CD4-positive, alpha-beta memory T cell (primary cell): ENCODE measurements at regions of chr11 and their contacts with region 1.

Region 1: GRCh38 chr11:7442588-7443215 is 42.6 kb upstream of the OLFML1 start:
- DNase-seq: peak; percentile 55 to 61 (median 59)
- H3K4me3 ChIP-seq: no peak overlapping the region
- H3K4me3 Mint-ChIP-seq: no peak overlapping the region
- H3K27ac ChIP-seq: no peak overlapping the region
- H3K27ac Mint-ChIP-seq: no peak overlapping the region
- H3K4me1 ChIP-seq: no peaks in the 10 kb centered on the region
- H3K4me1 Mint-ChIP-seq: peaks cover 0 to 2% (median 0%) of the 10 kb centered on the region in 4 donors
- H3K27me3 ChIP-seq: no peaks in the 10 kb centered on the region
- H3K27me3 Mint-ChIP-seq: peaks cover 2 to 5% of the 10 kb centered on the region in 2 donors

Region 2: GRCh38 chr11:7098235-7098832 is 344.4 kb before region 1 on chr11:
- CTCF ChIA-PET with region 1: interaction called, 71 read pairs
- POLR2A ChIA-PET with region 1: no interaction called
- intact Hi-C with region 1: loop called (anchors 1 kb)
- DNase-seq: peak; percentile 32 to 47 (median 39)
- H3K4me3 ChIP-seq: no peak overlapping the region
- H3K4me3 Mint-ChIP-seq: no peak overlapping the region
- H3K27ac ChIP-seq: no peak overlapping the region
- H3K27ac Mint-ChIP-seq: no peak overlapping the region
- H3K4me1 ChIP-seq: no peaks in the 10 kb centered on the region
- H3K4me1 Mint-ChIP-seq: no peaks in the 10 kb centered on the region
- H3K27me3 ChIP-seq: no peaks in the 10 kb centered on the region
- H3K27me3 Mint-ChIP-seq: peaks cover 5 to 11% of the 10 kb centered on the region in 2 donors

Region 3: GRCh38 chr11:7299393-7299792 is 143.3 kb before region 1 on chr11:
- CTCF ChIA-PET with region 1: no interaction called
- POLR2A ChIA-PET with region 1: no interaction called
- intact Hi-C with region 1: no loop called
- DNase-seq: no peak
- H3K4me3 ChIP-seq: no peak overlapping the region
- H3K4me3 Mint-ChIP-seq: no peak overlapping the region
- H3K27ac ChIP-seq: no peak overlapping the region
- H3K27ac Mint-ChIP-seq: no peak overlapping the region
- H3K4me1 ChIP-seq: no peaks in the 10 kb centered on the region
- H3K4me1 Mint-ChIP-seq: no peaks in the 10 kb centered on the region
- H3K27me3 ChIP-seq: no peaks in the 10 kb centered on the region
- H3K27me3 Mint-ChIP-seq: peaks cover 5 to 6% of the 10 kb centered on the region in 2 donors

Region 4: DNA sequence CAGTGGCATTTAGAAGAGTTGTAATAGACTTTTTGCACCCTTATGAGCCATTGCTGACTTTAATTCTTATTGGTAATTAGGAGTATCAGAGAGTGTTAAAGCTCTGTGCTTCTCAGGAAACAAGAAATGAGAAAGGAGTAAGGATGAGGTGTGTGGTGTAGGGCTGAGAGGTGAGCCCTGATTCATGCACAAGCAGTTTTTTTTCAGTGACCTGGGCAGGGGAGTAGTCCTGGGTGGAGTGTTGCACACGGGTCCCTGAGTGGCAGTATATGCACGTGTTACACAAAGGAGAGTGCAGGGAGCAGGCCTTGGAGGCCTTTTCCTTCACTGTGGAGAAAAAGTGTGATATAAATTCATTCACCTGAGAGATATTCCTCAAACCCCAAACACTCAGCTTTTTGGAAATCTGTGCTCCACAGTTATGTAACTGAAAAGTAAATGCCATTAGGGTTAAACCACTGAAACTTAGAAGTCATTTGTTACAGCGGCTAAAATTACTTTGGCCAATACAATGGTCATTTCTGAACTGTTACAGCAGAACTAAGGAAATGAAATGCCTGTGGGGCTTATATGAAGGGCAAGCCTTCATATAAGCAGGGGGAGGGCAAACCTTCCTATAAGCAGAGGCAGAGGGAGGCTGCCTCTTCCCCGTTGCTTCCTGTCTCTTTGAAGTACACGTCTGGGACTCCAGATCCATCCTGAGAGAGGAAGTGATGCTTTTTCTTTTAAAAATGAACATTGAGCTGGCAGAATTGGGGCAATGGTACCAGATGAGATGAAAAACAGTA is 20.0 kb before region 1 on chr11:
- CTCF ChIA-PET with region 1: interaction called, 12 read pairs
- POLR2A ChIA-PET with region 1: interaction called, 3 read pairs
- intact Hi-C with region 1: no loop called
- DNase-seq: peak in 2 of 5 donors; percentile 5 to 6
- H3K4me3 ChIP-seq: no peak overlapping the region
- H3K4me3 Mint-ChIP-seq: peak overlapping the region in 6 of 8 donors; percentile 17 to 40 (median 34)
- H3K27ac ChIP-seq: no peak overlapping the region
- H3K27ac Mint-ChIP-seq: peak overlapping the region in 6 of 7 donors; percentile 2 to 82 (median 35)
- H3K4me1 ChIP-seq: peaks cover 13% of the 10 kb centered on the region
- H3K4me1 Mint-ChIP-seq: peaks cover 12 to 23% (median 17%) of the 10 kb centered on the region in 4 donors
- H3K27me3 ChIP-seq: no peaks in the 10 kb centered on the region
- H3K27me3 Mint-ChIP-seq: peaks cover 0 to 3% of the 10 kb centered on the region in 2 donors

Region 5: GRCh38 chr11:7473717-7474116 is 31.0 kb after region 1 on chr11:
- CTCF ChIA-PET with region 1: no interaction called
- POLR2A ChIA-PET with region 1: no interaction called
- intact Hi-C with region 1: no loop called
- DNase-seq: no peak
- H3K4me3 ChIP-seq: no peak overlapping the region
- H3K4me3 Mint-ChIP-seq: no peak overlapping the region
- H3K27ac ChIP-seq: no peak overlapping the region
- H3K27ac Mint-ChIP-seq: no peak overlapping the region
- H3K4me1 ChIP-seq: no peaks in the 10 kb centered on the region
- H3K4me1 Mint-ChIP-seq: no peaks in the 10 kb centered on the region
- H3K27me3 ChIP-seq: no peaks in the 10 kb centered on the region
- H3K27me3 Mint-ChIP-seq: peaks cover 0 to 3% of the 10 kb centered on the region in 2 donors

Region 6: DNA sequence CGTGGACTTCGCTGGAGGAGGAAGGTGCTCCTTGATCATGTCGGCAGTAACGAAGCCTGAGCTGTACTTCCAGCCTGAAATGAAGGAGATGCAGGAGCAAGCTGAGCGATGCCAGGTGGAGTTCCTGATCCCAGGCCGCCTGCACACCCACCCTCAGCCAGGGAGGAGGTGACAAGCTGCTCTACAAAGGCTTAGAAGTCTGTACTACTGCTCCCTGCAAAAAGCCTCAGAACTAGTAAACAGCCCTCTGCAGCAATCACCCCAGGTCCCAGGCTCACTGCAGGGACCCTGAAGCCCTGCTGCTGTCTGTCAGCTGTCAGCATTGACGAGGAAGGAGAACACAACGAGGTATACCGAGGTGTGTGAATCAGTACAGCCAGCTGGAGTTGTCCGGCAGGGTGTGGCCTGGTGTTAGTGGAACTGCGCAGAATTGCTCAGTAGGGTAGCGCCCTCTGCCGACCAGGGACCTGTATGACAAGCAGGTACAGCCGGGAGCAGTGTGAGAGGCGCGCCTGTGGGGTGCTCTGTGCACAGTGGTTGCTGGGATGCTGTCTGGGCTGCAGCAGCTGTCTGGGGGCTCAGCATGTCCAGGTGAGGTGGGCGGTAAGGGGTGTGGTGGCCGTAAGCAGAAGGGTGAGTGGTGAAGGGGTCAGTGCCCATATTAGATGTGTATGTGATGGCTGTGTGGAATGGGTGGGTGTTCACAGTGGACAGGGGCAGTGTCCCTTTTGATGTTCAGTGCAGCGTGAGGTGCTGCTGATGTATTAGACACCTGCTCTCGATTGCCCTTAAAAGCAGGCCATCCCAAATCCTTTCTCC is 223.0 kb after region 1 on chr11:
- CTCF ChIA-PET with region 1: interaction called, 3 read pairs
- POLR2A ChIA-PET with region 1: no interaction called
- intact Hi-C with region 1: loop called (anchors 1 kb)
- DNase-seq: peak; percentile 58 to 70 (median 68)
- H3K4me3 ChIP-seq: no peak overlapping the region
- H3K4me3 Mint-ChIP-seq: no peak overlapping the region
- H3K27ac ChIP-seq: no peak overlapping the region
- H3K27ac Mint-ChIP-seq: no peak overlapping the region
- H3K4me1 ChIP-seq: no peaks in the 10 kb centered on the region
- H3K4me1 Mint-ChIP-seq: peaks cover 0 to 3% (median under 1%) of the 10 kb centered on the region in 4 donors
- H3K27me3 ChIP-seq: no peaks in the 10 kb centered on the region
- H3K27me3 Mint-ChIP-seq: peaks cover 3 to 5% of the 10 kb centered on the region in 2 donors